Dendritic cell treated with granulocyte-macrophage colony-stimulating factor and Interleukin-4, amounts not matched to agents 40 ng/mL and 50 ng/mL, for 4 days (primary cell): ENCODE measurements at regions of chr16 and their contacts with region 1.

Region 1: GRCh38 chr16:74700438-74701225 is at the start of gene MLKL:
- H3K4me3 Mint-ChIP-seq: peak within 1 kb of the TSS; percentile 81
- H3K27ac Mint-ChIP-seq: peak within 1 kb of the TSS; percentile 94
- H3K4me1 Mint-ChIP-seq: peaks cover 64% of the 10 kb centered on the region
- H3K27me3 Mint-ChIP-seq: no peaks in the 10 kb centered on the region

Region 2: DNA sequence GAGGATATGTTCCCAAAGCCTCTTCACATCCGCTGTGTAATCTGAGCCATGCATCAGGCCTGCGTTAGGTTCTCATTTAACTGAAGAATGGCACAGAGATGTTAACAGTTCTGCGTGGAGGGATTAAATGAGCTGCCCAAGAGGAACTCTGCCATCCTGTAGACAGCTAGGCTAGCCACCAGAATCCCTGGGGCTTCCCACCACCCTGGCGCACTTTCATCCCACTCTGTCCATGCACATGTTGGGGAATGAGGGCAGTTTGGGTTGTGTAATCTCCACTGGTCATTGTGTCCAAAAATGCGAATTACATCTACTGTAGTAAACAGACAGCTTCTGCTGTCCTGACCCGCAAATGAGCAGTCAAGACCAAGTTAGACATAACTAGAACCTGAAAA is 92.7 kb before region 1 on chr16:
- intact Hi-C with region 1: no loop called
- H3K4me3 Mint-ChIP-seq: no peak overlapping the region
- H3K27ac Mint-ChIP-seq: no peak overlapping the region
- H3K4me1 Mint-ChIP-seq: peaks cover 27% of the 10 kb centered on the region
- H3K27me3 Mint-ChIP-seq: peaks cover 14% of the 10 kb centered on the region

Region 3: GRCh38 chr16:74666425-74667254 is 34.0 kb before region 1 on chr16 and contains the start of gene RFWD3:
- intact Hi-C with region 1: loop called (anchors 2 kb)
- H3K4me3 Mint-ChIP-seq: peak within 1 kb of the TSS; percentile 88
- H3K27ac Mint-ChIP-seq: peak within 1 kb of the TSS; percentile 85
- H3K4me1 Mint-ChIP-seq: peaks cover 40% of the 10 kb centered on the region
- H3K27me3 Mint-ChIP-seq: no peaks in the 10 kb centered on the region

Region 4: GRCh38 chr16:74896389-74897240 is 196.0 kb after region 1 on chr16:
- intact Hi-C with region 1: no loop called
- H3K4me3 Mint-ChIP-seq: no peak overlapping the region
- H3K27ac Mint-ChIP-seq: no peak overlapping the region
- H3K4me1 Mint-ChIP-seq: no peaks in the 10 kb centered on the region
- H3K27me3 Mint-ChIP-seq: no peaks in the 10 kb centered on the region